ENCODE measurements at regions of chr18 and their contacts with region 1.

Region 1: GRCh38 chr18:7566567-7567473 is at the start of gene PTPRM:
- DNase-seq: no peak
- ATAC-seq: peak; percentile 96
- H3K4me3 ChIP-seq: peak within 1 kb of the TSS; percentile 45 to 46
- H3K27ac ChIP-seq: no peak within 1 kb of the TSS
- H3K4me1 ChIP-seq: no peaks in the 10 kb centered on the region
- H3K27me3 ChIP-seq: peaks cover 21% of the 10 kb centered on the region
- CTCF ChIP-seq: peak; percentile 92
- total RNA-seq, gene PTPRM: 1.6 TPM

Region 2: DNA sequence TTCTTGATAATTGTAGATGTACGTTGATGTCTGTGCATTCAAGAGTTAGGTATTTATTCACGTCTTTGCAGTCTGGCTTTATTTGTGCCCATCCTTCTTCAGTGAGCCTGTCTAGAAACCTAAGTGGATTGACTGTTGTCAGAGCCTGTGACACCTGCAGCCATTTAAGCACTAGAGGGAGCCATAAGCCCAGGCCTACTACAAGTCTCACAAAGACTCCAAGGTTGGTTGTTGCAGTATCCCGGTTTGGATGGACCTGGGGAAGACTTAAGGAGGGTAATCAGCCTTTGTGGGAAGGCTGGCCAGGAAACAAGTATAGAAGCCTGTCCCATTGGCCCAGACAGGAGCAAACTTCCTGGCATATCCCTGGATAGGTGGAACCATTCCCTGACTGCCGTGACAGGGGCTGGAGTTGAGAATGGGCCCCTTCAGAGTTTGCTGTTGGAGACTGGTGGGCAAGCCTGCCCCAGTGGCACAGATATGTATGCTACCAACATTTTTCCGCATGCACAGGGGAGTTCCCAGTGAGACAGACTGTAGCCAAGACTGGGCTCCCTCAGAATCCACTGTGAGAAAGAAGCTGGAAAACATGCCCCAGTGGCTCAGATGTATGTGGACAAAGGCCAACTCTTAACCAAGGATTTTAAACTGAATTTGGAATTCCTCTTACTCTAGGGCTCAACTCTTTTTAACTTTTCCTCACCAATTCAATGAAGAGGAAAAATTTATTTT is 345.2 kb before region 1 on chr18:
- CTCF ChIA-PET with region 1: no interaction called
- POLR2A ChIA-PET with region 1: no interaction called
- in situ Hi-C with region 1: no loop called
- intact Hi-C with region 1: loop called (anchors 10 kb)
- DNase-seq: peak; percentile 39
- ATAC-seq: peak; percentile 91
- H3K4me3 ChIP-seq: no peak overlapping the region
- H3K27ac ChIP-seq: no peak overlapping the region
- H3K4me1 ChIP-seq: no peaks in the 10 kb centered on the region
- H3K27me3 ChIP-seq: no peaks in the 10 kb centered on the region
- CTCF ChIP-seq: peak; percentile 89

Region 3: DNA sequence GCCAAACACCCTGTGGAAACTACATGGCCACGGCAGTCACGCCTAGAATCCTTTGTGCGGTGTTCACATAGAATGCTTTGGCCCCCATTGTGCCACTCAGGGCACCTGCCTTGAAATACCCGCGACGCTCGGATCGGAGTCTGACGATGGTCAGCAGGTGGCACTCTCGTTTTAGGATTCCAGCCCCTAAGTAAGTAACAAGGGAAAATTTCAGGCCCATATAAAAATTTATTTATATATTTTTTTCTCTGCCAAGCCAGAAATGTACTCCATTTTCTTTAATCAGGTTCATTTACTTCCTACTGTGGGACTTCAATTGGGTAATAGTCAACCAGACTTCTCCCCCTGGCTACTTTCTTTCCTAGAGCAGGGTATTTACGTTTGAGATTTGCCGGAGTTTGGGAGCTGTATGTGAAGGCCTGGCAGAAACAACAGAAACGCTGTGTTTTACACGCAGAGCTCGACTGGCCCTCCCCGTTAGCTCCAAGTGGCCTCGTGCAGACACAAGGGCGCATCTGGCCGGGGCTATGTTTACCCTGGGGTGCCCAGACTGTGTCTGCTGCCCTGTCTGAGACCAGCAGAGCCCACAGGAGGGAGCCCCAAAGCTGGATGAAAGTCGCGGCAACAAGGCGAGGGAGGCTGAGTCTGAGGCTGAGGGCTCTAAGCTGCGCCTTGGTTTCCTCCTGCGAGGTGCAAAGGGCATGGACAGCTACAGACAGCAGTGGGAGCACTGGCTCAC is 294.3 kb before region 1 on chr18:
- CTCF ChIA-PET with region 1: no interaction called
- POLR2A ChIA-PET with region 1: no interaction called
- in situ Hi-C with region 1: no loop called
- intact Hi-C with region 1: loop called (anchors 10 kb)
- DNase-seq: no peak
- ATAC-seq: peak; percentile 70; the same call in 1 of the 2 replicates
- H3K4me3 ChIP-seq: no peak overlapping the region
- H3K27ac ChIP-seq: no peak overlapping the region
- H3K4me1 ChIP-seq: no peaks in the 10 kb centered on the region
- H3K27me3 ChIP-seq: no peaks in the 10 kb centered on the region
- CTCF ChIP-seq: peak; percentile 69

Region 4: GRCh38 chr18:7383002-7383980 is 183.5 kb before region 1 on chr18:
- CTCF ChIA-PET with region 1: no interaction called
- POLR2A ChIA-PET with region 1: no interaction called
- in situ Hi-C with region 1: no loop called
- intact Hi-C with region 1: no loop called
- DNase-seq: no peak
- ATAC-seq: no peak
- H3K4me3 ChIP-seq: no peak overlapping the region
- H3K27ac ChIP-seq: no peak overlapping the region
- H3K4me1 ChIP-seq: no peaks in the 10 kb centered on the region
- H3K27me3 ChIP-seq: no peaks in the 10 kb centered on the region
- CTCF ChIP-seq: no peak